Activated B cell treated with CpG ODN at 0.5 μM for 24 hours (primary cell): ENCODE measurements at regions of chr4 and their contacts with region 1.

Region 1: DNA sequence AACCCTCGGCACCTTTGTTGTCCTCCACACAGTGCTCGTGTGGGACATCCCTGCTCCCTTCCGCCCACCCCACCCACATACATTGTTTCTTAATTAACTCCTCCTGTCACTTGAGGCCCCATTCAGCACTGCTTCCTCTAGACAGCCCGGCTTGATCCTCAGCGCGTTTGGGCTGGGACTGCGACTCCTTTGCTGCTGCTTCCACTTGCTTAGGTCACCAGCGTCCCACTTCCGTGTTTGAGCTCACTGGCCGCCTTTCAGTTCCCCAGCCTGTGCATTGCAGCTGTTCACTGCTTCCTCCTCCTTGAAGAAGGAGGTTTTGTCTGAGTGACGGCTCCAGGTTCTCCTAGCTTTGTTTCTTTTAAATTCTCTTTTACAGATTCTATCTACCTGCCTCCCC is 16.1 kb downstream of the RNF4 start:
- DNase-seq: peak; percentile 64
- ATAC-seq: peak; percentile 86
- H3K4me3 Mint-ChIP-seq: peak overlapping the region; percentile 75
- H3K27ac Mint-ChIP-seq: peak overlapping the region; percentile 92
- H3K4me1 Mint-ChIP-seq: peaks cover 93% of the 10 kb centered on the region
- H3K27me3 Mint-ChIP-seq: no peaks in the 10 kb centered on the region
- CTCF ChIP-seq: no peak

Region 2: DNA sequence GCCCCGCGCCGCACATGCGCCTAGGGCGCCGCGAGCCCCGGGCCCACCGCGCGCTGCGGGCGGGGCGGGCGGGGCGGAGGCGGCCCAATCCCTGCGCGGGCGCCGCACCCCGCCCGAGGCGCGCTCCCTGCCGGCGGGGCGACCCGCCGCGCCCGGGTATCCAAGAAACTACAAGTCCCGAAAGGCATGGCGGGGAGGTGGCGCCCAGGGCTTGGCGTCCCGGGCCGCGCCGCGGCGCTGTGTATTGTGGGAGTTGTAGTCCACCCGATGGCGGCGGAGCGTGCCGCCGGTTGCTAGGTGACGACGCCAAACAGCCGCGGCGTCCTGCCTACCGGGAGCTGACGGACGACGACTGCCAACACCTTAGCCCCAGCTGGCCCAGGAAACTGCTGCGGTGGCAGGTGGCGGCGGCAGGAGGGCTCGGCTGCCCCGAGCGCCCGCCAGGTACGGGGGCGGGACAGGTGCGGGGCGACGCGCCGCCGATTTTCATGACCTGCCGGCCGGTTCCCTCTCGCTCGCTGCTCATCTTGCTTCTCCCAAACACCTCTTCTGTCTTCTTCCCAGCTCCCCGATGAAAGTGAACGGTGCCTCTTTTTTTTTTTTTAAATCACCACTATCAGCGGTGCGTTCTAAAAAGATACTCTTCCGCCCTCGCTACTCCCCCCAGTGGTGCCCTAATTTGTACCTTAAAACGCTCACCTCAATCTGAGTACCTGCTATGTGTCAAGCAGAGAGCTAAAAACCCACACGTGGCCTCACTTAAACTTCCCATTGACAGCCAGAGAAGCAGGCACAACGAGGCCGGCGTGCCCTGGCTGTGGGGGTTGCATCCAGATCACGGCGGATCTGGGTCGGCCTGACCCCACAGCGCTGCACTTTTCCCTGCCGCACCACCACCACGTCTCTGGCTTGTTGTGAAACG is 66.1 kb before region 1 on chr4 and contains the start of gene CFAP99:
- CTCF ChIA-PET with region 1: no interaction called
- POLR2A ChIA-PET with region 1: no interaction called
- intact Hi-C with region 1: no loop called
- DNase-seq: peak; percentile 93
- ATAC-seq: peak; percentile 91
- H3K4me3 Mint-ChIP-seq: peak within 1 kb of the TSS; percentile 91
- H3K27ac Mint-ChIP-seq: peak within 1 kb of the TSS; percentile 90
- H3K4me1 Mint-ChIP-seq: peaks cover 39% of the 10 kb centered on the region
- H3K27me3 Mint-ChIP-seq: peaks cover 28% of the 10 kb centered on the region
- CTCF ChIP-seq: no peak
- total RNA-seq, gene CFAP99: not detected in 2 replicates

Region 3: DNA sequence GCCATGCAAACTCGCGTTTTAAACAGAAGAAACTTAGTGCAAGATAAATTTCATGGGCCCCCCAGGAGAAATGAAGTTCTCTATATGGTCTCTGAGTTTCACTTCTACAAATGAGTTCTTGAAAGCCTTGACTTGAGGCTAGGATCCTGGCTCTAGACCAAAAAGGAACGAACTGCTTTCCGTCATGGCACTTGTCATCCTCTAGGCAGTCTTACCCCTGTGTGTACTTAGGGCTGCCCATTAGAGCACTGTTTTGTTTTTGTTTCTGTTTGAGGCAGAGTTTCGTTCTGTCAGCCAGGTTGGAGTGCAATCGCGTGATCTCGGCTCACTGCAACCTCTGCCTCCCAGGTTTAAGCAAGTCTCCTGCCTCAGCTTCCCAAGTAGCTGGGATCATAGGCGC is 12.9 kb after region 1 on chr4:
- CTCF ChIA-PET with region 1: interaction called, 7 read pairs
- POLR2A ChIA-PET with region 1: interaction called, 9 read pairs
- intact Hi-C with region 1: loop called (anchors 1 kb)
- DNase-seq: no peak
- ATAC-seq: peak; percentile 91
- H3K4me3 Mint-ChIP-seq: peak overlapping the region; percentile 55
- H3K27ac Mint-ChIP-seq: peak overlapping the region; percentile 84
- H3K4me1 Mint-ChIP-seq: peaks cover 44% of the 10 kb centered on the region
- H3K27me3 Mint-ChIP-seq: no peaks in the 10 kb centered on the region
- CTCF ChIP-seq: no peak

Region 4: DNA sequence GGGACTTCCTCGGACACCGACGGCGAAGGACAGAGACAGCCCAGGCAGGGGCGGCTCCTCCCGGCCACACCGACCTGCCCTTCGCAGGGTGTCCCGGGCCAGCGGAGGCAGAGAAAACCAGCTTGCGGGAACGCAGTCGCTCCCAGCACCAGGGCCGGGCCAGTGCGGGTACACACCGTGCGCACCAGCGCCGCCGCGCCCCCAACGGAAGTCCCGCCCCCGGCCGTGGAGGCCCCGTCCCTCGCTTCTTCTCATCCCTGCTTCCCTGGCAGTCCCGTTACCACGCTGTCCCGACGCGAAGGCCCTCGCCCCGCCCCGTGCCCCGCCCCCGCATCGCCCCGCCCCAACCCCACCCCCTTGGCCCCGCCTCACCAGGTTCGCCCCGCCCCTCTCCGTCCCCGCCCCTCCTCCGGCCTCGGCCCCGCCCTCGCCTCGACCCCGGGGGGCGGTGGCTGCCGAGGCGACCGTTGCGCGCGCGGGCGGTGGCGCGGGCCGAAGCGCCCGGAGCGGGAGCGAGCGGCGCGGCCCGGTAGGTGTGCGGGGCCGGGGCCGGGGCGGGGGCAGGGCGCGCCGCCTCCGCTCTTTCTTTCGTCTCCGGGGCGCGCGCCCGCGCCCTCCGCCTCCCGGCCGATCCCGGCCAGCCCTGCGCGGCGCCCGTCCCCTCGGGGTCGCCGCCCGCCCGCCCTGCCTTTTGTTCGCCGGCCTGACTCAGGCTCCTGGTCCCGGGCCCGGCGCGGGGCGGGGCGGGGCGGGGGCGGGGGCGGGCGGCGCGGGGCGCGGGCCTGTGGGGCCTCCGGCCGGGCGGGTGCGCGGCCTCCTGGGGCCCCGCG is 807.8 kb after region 1 on chr4 and contains the start of gene RGS12:
- CTCF ChIA-PET with region 1: no interaction called
- POLR2A ChIA-PET with region 1: no interaction called
- intact Hi-C with region 1: loop called (anchors 10 kb)
- DNase-seq: peak; percentile 81
- ATAC-seq: peak; percentile 83
- H3K4me3 Mint-ChIP-seq: peak within 1 kb of the TSS; percentile 86
- H3K27ac Mint-ChIP-seq: peak within 1 kb of the TSS; percentile 51
- H3K4me1 Mint-ChIP-seq: peaks cover 14% of the 10 kb centered on the region
- H3K27me3 Mint-ChIP-seq: peaks cover 15% of the 10 kb centered on the region
- CTCF ChIP-seq: no peak
- total RNA-seq, gene RGS12: 8.5 and 10.6 TPM in 2 replicates